CD14-positive monocyte (primary cell): ENCODE measurements at regions of chr10 and their contacts with region 1.

Region 1: GRCh38 chr10:22251751-22252223 is 34.0 kb upstream of the EBLN1 start:
- DNase-seq: peak; percentile 72 to 77 (median 73)
- H3K4me3 ChIP-seq: peak overlapping the region; percentile 67 to 93 (median 90)
- H3K4me3 Mint-ChIP-seq: peak overlapping the region; percentile 91 to 98
- H3K27ac ChIP-seq: peak overlapping the region; percentile 94 to 97
- H3K27ac Mint-ChIP-seq: peak overlapping the region; percentile 96 to 100 (median 100)
- H3K4me1 ChIP-seq: peaks cover 5 to 11% of the 10 kb centered on the region in 2 donors
- H3K4me1 Mint-ChIP-seq: peaks cover 23% of the 10 kb centered on the region
- H3K27me3 ChIP-seq: no peaks in the 10 kb centered on the region
- H3K27me3 Mint-ChIP-seq: peaks cover 0 to 7% (median under 1%) of the 10 kb centered on the region in 3 donors
- CTCF ChIP-seq: no peak

Region 2: DNA sequence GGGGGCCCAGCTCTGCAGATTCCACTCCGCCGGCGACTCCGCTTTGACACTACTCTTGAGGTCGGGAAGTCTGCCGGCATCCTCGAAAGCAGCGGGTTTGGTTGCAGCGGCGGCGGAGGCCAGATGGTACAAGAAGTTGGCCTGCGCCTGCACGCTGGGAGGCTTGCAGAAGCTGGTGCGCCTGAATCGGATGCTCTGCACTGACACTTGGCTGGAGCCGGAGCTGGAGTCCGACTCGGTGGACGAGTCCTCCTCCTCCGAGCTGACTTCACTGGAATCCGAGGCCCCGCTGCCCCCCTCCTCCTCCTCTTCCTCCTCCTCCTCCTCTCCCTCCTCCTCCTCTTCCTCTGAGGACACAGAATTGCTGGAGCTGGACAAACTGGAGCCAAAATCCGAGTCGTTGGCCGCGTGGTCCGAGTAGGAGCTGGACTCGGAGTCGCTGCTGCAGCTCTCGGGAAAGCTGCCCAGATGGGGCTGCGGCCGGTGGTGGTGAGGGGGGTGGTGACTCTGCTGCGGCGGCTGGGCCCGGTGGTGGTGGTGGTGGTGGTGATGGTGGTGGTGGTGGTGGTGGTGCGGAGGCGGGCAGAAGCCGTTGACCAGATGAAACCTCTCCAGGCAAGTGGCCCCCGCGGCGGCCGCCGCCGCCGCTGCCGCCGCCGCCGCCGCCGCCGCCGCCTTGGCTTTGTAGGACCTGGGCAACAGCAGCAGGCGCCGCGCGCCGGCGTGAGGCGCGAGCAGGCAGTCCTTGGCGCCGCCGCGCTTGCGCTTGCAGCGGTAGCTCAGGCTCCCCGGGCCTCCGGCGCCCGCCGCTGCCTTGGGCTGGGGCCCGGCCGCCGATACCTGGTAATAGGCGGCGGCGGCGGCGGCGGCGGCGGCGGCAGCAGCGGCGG is 735.3 kb before region 1 on chr10:
- intact Hi-C with region 1: loop called in 1 of 2 experiments (anchors 10 kb)
- DNase-seq: peak in 2 of 3 donors; percentile 51 to 52
- H3K4me3 ChIP-seq: peak overlapping the region; percentile 44 to 79 (median 45)
- H3K4me3 Mint-ChIP-seq: peak overlapping the region; percentile 83 to 97
- H3K27ac ChIP-seq: no peak overlapping the region
- H3K27ac Mint-ChIP-seq: no peak overlapping the region
- H3K4me1 ChIP-seq: peaks cover 35 to 40% of the 10 kb centered on the region in 2 donors
- H3K4me1 Mint-ChIP-seq: peaks cover 41% of the 10 kb centered on the region
- H3K27me3 ChIP-seq: peaks cover 54 to 80% of the 10 kb centered on the region in 2 donors
- H3K27me3 Mint-ChIP-seq: peaks cover 57 to 82% (median 66%) of the 10 kb centered on the region in 3 donors
- CTCF ChIP-seq: no peak

Region 3: DNA sequence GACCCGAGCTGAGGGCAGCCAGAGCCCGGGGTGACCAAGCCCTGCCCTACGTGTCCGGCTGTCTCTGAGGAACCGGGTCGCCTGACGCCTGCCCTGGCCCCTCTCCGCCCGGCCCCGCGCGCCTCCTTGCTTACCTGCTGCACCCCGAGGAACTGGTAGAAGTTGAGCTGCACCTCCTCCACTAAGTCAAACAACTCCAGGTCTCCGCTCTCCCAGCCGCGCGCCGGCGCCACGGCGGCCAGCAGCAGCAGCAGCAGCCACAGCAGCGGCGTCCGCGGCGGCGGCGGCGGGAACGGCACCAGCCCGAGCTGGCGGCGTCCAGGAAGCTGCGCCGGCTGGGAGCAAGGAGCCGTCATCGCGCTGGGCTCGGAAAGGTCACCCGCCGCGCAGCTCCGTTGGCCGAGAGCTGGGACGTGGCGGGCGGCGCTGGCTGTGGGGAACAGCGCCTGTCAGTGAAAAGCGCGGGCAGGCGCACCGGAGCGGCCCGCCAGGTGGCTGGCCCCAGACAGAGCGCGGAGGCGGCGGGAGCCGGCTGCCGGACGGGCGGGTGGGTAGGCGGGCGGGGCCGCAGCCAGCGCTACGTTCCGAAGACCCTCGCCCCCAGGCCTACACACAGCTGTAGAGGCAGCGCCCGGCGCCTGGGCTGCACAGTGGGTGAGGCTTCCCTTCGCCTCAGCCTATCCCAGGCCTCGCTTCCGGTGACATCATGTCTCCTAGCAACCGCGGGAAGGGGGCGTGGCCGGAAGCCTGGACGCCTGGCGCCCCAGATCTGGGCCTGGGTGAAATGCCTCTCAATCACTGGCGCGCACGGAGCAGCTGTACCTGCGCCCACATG is 248.5 kb before region 1 on chr10 and contains the start of gene DNAJC1:
- intact Hi-C with region 1: loop called (anchors 5 to 10 kb)
- DNase-seq: peak; percentile 92 to 95 (median 93)
- H3K4me3 ChIP-seq: peak within 1 kb of the TSS; percentile 56 to 90 (median 83)
- H3K4me3 Mint-ChIP-seq: peak within 1 kb of the TSS; percentile 92 to 99
- H3K27ac ChIP-seq: peak within 1 kb of the TSS; percentile 85 to 87
- H3K27ac Mint-ChIP-seq: peak within 1 kb of the TSS; percentile 85 to 94 (median 92)
- H3K4me1 ChIP-seq: peaks cover 17 to 24% of the 10 kb centered on the region in 2 donors
- H3K4me1 Mint-ChIP-seq: peaks cover 31% of the 10 kb centered on the region
- H3K27me3 ChIP-seq: no peaks in the 10 kb centered on the region
- H3K27me3 Mint-ChIP-seq: peaks cover 0 to 1% (median 0%) of the 10 kb centered on the region in 3 donors
- CTCF ChIP-seq: peak; percentile 15
- polyA plus RNA-seq, gene DNAJC1: 11.4 to 12.9 (median 12.5) TPM

Region 4: DNA sequence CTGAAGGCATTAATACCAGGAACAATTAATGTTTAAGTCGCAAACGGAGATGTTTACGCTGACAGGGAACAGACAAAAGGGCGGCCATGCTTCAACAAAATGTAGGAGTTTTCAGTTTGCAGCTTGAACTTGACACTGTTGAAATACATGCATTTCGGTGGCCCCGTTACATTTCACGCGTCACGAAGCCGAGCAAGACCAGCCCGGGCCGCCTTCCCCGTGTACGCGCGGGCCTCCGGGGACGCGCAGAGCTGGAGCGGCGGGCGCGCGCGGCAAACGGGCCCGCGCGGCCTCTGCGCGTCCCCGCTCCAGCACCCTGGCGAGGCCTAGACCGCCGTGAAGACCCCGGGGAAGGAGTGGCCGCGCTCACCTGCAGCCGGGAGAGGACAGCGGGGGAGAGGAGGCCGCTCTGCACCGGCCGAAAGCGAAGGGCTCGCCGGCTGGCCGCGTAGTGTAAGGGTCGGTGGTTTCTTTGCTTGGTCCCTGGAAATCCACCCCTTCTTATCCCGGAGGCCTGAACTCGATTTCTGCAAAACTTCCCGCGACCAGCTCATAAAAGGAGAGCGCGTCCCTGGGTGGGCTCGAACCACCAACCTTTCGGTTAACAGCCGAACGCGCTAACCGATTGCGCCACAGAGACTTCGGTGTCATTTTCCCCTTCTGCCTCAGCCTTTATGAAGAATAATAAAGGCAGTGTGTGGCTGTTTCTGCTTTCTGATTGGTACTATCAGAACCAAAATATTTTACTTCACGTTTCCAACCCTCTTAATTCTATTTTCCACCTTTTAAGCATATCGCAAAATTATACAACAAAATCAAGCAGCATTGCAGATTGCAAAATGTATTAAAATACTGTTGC is 22.6 kb before region 1 on chr10:
- intact Hi-C with region 1: loop called in 1 of 2 experiments (anchors 2 kb)
- DNase-seq: peak; percentile 82 to 86 (median 84)
- H3K4me3 ChIP-seq: peak overlapping the region; percentile 81
- H3K4me3 Mint-ChIP-seq: peak overlapping the region; percentile 87 to 90
- H3K27ac ChIP-seq: peak overlapping the region; percentile 74 to 81
- H3K27ac Mint-ChIP-seq: peak overlapping the region; percentile 79 to 94 (median 89)
- H3K4me1 ChIP-seq: peaks cover 16 to 22% of the 10 kb centered on the region in 2 donors
- H3K4me1 Mint-ChIP-seq: peaks cover 22% of the 10 kb centered on the region
- H3K27me3 ChIP-seq: peaks cover 0 to 2% of the 10 kb centered on the region in 2 donors
- H3K27me3 Mint-ChIP-seq: peaks cover under 1 to 8% (median 7%) of the 10 kb centered on the region in 3 donors
- CTCF ChIP-seq: no peak

Region 5: GRCh38 chr10:22316285-22317120 is 64.7 kb after region 1 on chr10 and contains the start of gene COMMD3:
- intact Hi-C with region 1: loop called (anchors 5 to 10 kb)
- DNase-seq: peak; percentile 82 to 85 (median 82)
- H3K4me3 ChIP-seq: peak within 1 kb of the TSS; percentile 78 to 97 (median 91)
- H3K4me3 Mint-ChIP-seq: peak within 1 kb of the TSS; percentile 88 to 99
- H3K27ac ChIP-seq: peak within 1 kb of the TSS; percentile 89 to 91
- H3K27ac Mint-ChIP-seq: peak within 1 kb of the TSS; percentile 93 to 97 (median 95)
- H3K4me1 ChIP-seq: peaks cover 28 to 45% of the 10 kb centered on the region in 2 donors
- H3K4me1 Mint-ChIP-seq: peaks cover 29% of the 10 kb centered on the region
- H3K27me3 ChIP-seq: peaks cover 0 to 9% of the 10 kb centered on the region in 2 donors
- H3K27me3 Mint-ChIP-seq: peaks cover 0 to 12% (median 2%) of the 10 kb centered on the region in 3 donors
- CTCF ChIP-seq: no peak
- polyA plus RNA-seq, gene COMMD3: 44.9 to 140 (median 138) TPM

Region 6: GRCh38 chr10:22427890-22428571 is 176.2 kb after region 1 on chr10:
- intact Hi-C with region 1: no loop called
- DNase-seq: no peak
- H3K4me3 ChIP-seq: no peak overlapping the region
- H3K4me3 Mint-ChIP-seq: no peak overlapping the region
- H3K27ac ChIP-seq: no peak overlapping the region
- H3K27ac Mint-ChIP-seq: no peak overlapping the region
- H3K4me1 ChIP-seq: peaks cover 7 to 8% of the 10 kb centered on the region in 2 donors
- H3K4me1 Mint-ChIP-seq: peaks cover 9% of the 10 kb centered on the region
- H3K27me3 ChIP-seq: peaks cover 3 to 12% of the 10 kb centered on the region in 2 donors
- H3K27me3 Mint-ChIP-seq: peaks cover 10 to 25% (median 16%) of the 10 kb centered on the region in 3 donors
- CTCF ChIP-seq: no peak